ENCODE measurements at regions of chr10 and their contacts with region 1.

Region 1: DNA sequence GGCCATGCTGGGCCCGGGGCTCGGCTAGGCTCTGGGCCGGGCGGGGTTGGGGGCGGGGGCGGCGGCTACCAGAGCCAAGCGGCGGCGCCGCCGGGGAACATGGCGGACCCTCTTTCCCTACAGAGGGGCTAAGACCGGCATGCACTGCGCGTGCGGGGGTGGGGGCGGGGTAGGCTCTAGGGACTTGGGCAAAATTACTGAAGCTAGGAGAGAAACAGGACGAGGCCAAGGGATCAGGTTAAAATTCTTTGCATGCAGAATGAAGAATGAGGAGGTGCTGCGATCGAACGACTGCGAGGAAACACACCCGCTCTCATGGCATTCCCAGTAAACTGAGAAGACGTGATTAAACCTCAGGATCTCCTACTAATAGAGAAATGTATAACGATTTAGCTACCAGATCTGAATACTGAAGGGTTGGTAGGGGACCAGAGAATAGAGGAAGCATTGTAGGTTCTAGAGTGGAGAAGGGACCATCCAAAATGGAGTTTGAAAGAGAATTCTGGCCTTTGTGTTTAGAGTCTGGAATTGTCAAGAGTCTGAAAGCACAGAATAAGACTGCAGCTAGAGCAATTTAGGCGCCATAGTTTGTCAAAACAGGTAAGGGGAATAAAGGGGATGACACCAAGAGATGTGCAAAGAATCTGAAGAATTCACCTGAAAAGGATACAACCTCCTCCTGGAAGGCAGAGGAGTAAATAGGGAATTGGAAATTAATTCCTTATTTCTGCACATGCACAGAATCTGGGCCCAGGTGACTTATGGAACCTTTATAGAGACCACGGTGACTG is at the start of gene PPP3CB:
- DNase-seq: peak in 1 of 2 experiments; percentile 89
- H3K4me3 ChIP-seq: peak within 1 kb of the TSS; percentile 87
- H3K27ac ChIP-seq: peak within 1 kb of the TSS; percentile 77
- H3K4me1 ChIP-seq: peaks cover 32% of the 10 kb centered on the region
- H3K27me3 ChIP-seq: no peaks in the 10 kb centered on the region
- CTCF ChIP-seq: no peak
- total RNA-seq, gene PPP3CB: 28.8 and 34.0 TPM in 2 replicates

Region 2: DNA sequence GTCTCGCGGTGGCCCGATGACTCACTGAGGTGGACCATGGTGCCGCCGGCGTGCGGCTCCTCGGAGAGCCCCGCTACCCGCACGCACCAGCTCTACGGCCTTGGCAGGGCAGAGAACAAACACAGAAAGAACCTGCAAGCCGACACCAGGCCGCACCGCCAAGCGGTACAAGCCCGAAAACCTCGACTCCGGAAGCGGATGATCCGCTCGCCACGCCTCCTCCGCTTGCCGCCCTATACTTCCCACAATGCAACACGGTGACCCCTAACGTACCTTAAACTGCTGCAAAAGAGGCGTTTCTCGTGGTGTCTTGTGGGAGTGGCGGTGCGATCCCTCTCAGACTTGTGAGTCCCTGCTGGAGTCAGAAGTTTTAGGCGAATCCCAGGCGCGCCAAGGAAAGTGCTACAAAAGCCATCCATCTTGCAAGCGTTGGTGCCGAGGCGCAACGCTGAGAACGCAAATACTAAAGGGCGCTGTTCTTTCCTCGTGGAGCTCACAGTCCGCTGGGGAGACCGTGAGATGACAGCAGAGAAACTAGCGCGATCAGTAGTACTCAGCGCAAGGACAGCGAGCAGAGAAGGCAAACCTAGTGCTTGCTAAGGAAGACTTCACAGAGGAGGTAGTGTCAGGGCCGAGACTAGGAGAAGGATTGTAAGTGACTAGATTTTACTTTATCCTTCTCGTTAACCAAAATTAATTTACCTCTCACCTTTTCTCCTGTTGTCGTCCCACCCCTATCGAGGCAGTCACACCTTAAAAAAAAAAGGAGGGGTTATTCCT is 243.4 kb before region 1 on chr10 and contains the start of gene MRPS16:
- CTCF ChIA-PET with region 1: no interaction called
- POLR2A ChIA-PET with region 1: interaction called, 6 read pairs
- intact Hi-C with region 1: loop called (anchors 1 kb)
- DNase-seq: peak; percentile 93 to 95
- H3K4me3 ChIP-seq: peak within 1 kb of the TSS; percentile 70
- H3K27ac ChIP-seq: peak within 1 kb of the TSS; percentile 80
- H3K4me1 ChIP-seq: peaks cover 37% of the 10 kb centered on the region
- H3K27me3 ChIP-seq: no peaks in the 10 kb centered on the region
- CTCF ChIP-seq: 0 out of 2 replicates have a peak, but pooled peaks have one; percentile 6
- total RNA-seq, gene MRPS16: 148 and 175 TPM in 2 replicates

Region 3: GRCh38 chr10:73358331-73359279 is 137.5 kb before region 1 on chr10 and contains the start of gene CFAP70:
- CTCF ChIA-PET with region 1: no interaction called
- POLR2A ChIA-PET with region 1: interaction called, 12 read pairs
- intact Hi-C with region 1: no loop called
- DNase-seq: peak; percentile 95
- H3K4me3 ChIP-seq: peak within 1 kb of the TSS; percentile 61
- H3K27ac ChIP-seq: no peak within 1 kb of the TSS
- H3K4me1 ChIP-seq: peaks cover 5% of the 10 kb centered on the region; the same call in 1 of the 2 replicates
- H3K27me3 ChIP-seq: no peaks in the 10 kb centered on the region
- CTCF ChIP-seq: no peak
- total RNA-seq, gene CFAP70: 3.1 and 4.1 TPM in 2 replicates

Region 4: GRCh38 chr10:73448384-73448783 is 47.7 kb before region 1 on chr10:
- CTCF ChIA-PET with region 1: no interaction called
- POLR2A ChIA-PET with region 1: no interaction called
- intact Hi-C with region 1: no loop called
- DNase-seq: no peak
- H3K4me3 ChIP-seq: no peak overlapping the region
- H3K27ac ChIP-seq: no peak overlapping the region
- H3K4me1 ChIP-seq: no peaks in the 10 kb centered on the region
- H3K27me3 ChIP-seq: no peaks in the 10 kb centered on the region
- CTCF ChIP-seq: no peak

Region 5: GRCh38 chr10:73480158-73480557 is 15.9 kb before region 1 on chr10:
- CTCF ChIA-PET with region 1: interaction called, 3 read pairs
- POLR2A ChIA-PET with region 1: interaction called, 10 read pairs
- intact Hi-C with region 1: no loop called
- DNase-seq: peak in 1 of 2 experiments; percentile 61
- H3K4me3 ChIP-seq: no peak overlapping the region
- H3K27ac ChIP-seq: 0 out of 2 replicates have a peak overlapping the region, but pooled peaks have one; percentile 9
- H3K4me1 ChIP-seq: no peaks in the 10 kb centered on the region
- H3K27me3 ChIP-seq: no peaks in the 10 kb centered on the region
- CTCF ChIP-seq: no peak

Region 6: DNA sequence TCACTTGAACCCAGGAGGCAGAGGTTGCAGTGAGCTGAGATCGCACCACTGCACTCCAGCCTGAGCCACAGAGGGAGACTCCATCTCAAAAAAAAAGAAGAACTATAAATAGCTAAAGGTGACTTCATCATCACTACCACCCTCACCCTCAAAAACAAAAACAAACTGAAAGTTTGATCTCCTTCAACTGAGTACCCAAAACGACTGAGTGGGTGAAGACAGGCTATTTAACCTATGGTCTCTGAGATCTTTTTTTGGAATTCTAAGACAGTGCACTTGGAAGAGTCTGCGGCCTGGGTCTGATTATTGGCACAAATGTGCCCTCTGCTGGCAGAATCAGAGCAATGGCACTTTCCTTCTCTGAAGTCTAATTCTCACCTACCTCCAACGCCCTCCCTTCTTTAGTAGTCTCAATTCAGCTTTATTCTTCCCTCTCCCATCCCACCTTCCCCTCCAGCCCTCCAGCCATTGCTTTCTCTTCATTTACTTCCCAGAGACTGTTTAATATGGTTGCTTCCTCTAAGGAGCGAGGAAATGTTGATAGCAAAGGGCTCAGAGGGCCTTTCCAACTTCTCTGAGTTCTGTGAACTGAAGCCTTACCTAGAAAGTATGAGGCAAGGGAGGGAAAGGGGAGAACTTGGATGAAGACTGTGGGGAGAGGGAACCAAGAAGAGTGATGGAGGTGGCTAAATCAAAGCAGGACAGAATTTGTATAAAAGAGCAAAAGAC is 148.1 kb after region 1 on chr10:
- CTCF ChIA-PET with region 1: interaction called, 10 read pairs
- POLR2A ChIA-PET with region 1: no interaction called
- intact Hi-C with region 1: no loop called
- DNase-seq: peak; percentile 48 to 67
- H3K4me3 ChIP-seq: no peak overlapping the region
- H3K27ac ChIP-seq: no peak overlapping the region
- H3K4me1 ChIP-seq: peaks cover 7% of the 10 kb centered on the region
- H3K27me3 ChIP-seq: no peaks in the 10 kb centered on the region
- CTCF ChIP-seq: peak; percentile 96